Sigmoid colon (tissue), 7 donors: ENCODE measurements at regions of chr20 and their contacts with region 1.

Region 1: DNA sequence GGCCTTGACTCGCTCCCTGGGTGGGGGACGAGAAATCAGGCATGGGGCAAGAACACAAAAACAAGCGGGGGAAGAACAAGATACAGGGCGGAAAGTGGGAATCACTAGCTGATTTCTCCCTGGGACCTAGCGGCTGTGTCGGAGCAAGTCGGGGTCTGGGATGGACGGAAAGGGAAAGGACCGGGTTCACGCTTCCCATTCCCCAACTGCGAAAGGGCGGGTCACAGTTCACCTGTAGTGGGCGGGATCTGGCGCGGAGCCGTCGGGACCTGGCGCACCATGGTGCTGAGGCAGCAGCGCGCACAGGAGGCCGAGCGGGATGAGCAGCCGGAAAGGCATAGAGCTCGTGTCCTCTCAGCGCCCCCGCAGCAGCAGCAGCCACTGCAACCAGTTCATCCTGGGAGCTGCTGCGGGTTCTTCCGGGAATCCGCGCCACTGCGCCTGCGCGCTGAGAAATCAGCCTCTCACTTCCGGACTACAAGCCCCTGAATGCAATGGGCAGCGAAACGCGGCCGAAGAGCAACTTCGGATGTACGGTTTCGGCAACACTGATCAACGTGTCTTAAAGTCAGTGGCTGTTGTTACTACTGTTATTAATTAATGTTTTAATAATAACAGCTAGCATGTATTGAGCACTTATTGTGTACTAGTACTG is at the start of gene EDEM2:
- DNase-seq: peak; percentile 97
- H3K4me3 ChIP-seq: peak within 1 kb of the TSS; percentile 60 to 75 (median 70)
- H3K27ac ChIP-seq: peak within 1 kb of the TSS; percentile 76 to 82 (median 79)
- H3K4me1 ChIP-seq: peaks cover 0 to 29% (median 22%) of the 10 kb centered on the region in 4 donors
- H3K27me3 ChIP-seq: no peaks in the 10 kb centered on the region
- CTCF ChIP-seq: no peak
- EP300 ChIP-seq: no peak
- POLR2A ChIP-seq: peak; percentile 25 to 36
- total RNA-seq, gene EDEM2: 8.4 to 14.3 (median 8.8) TPM

Region 2: DNA sequence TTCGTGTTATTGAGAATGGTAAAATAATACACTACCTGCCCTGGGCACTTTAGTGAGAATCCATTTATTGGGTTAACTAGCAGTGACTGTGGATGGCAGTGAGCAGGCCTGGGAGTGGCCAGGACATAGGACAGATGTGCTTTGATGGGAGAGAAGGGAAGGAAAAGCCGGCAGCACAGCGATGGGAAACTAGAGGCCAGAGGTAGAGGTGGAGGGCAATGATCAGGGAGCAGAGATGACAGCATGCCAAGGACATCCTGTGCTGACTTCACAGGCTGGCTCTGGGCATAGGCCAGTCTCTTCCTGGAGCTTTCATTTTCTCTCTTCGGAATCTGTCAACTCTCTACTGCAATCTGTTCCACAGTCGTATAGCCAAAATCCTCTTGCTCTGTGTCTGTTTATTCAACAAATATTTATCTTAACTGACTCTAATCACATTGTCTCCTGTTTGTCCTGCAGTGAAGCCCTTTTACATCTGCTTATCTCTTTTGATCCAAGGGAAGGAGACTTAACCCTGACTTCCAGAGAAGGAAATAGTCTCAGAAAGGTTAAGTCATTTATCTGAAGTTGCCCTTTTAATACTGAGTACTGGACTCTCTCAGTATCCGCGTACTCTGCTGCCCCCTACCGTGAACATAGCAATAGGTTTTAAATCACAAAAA is 61.0 kb after region 1 on chr20:
- intact Hi-C with region 1: loop called (anchors 1 kb)
- DNase-seq: peak; percentile 89
- H3K4me3 ChIP-seq: peak overlapping the region in 2 of 4 donors; percentile 3 to 32
- H3K27ac ChIP-seq: peak overlapping the region; percentile 72 to 85 (median 76)
- H3K4me1 ChIP-seq: peaks cover 0 to 12% (median 7%) of the 10 kb centered on the region in 4 donors
- H3K27me3 ChIP-seq: no peaks in the 10 kb centered on the region
- CTCF ChIP-seq: peak; percentile 80 to 87 (median 82)
- EP300 ChIP-seq: no peak
- POLR2A ChIP-seq: no peak

Region 3: DNA sequence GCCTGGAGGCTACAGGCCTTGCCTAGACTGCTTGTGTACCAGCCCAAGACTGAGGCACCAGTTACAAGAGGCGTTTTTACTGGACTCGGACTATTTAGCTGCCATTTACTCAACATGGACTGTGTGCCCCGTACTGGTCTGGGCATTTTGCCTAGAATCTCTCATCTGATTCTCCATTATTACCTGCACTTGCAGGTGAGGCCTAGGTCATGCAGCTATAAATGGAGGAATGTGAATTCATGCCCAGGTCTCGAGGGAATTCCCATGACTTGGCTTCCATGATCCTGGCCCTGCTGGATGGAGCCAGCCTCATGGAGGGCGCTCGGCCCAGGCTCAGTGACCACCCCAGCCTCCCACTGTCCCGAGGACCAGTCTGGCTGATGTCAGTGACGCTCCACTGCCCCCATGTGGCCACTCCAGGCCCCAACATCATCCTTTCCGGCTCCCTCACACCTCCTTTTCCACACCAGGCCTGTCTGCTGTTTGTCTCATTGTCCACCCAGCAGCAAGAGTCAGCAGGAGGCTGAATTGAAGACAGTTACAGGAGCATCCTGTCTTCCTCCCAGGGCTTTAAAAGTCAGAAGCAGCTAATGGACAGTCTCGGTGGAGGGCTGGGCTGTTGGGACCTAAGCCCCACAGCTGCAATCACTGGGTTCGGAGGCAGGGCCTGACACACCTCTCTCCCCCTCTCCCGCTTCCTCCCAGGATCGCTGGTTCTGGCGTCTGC is 122.2 kb after region 1 on chr20:
- intact Hi-C with region 1: loop called (anchors 2 kb)
- DNase-seq: no peak
- H3K4me3 ChIP-seq: no peak overlapping the region
- H3K27ac ChIP-seq: peak overlapping the region in 1 of 4 donors; percentile 12
- H3K4me1 ChIP-seq: peaks cover 0 to 24% (median 15%) of the 10 kb centered on the region in 4 donors
- H3K27me3 ChIP-seq: no peaks in the 10 kb centered on the region
- CTCF ChIP-seq: peak; percentile 49 to 77 (median 63)
- EP300 ChIP-seq: no peak
- POLR2A ChIP-seq: no peak

Region 4: GRCh38 chr20:35434067-35435005 is 287.3 kb after region 1 on chr20:
- intact Hi-C with region 1: loop called (anchors 5 kb)
- DNase-seq: peak; percentile 73
- H3K4me3 ChIP-seq: no peak overlapping the region
- H3K27ac ChIP-seq: no peak overlapping the region
- H3K4me1 ChIP-seq: peaks cover 0 to 35% (median 30%) of the 10 kb centered on the region in 4 donors
- H3K27me3 ChIP-seq: no peaks in the 10 kb centered on the region
- CTCF ChIP-seq: no peak
- EP300 ChIP-seq: no peak
- POLR2A ChIP-seq: no peak